ENCODE measurements at regions of chr2 and their contacts with region 1.

Region 1: DNA sequence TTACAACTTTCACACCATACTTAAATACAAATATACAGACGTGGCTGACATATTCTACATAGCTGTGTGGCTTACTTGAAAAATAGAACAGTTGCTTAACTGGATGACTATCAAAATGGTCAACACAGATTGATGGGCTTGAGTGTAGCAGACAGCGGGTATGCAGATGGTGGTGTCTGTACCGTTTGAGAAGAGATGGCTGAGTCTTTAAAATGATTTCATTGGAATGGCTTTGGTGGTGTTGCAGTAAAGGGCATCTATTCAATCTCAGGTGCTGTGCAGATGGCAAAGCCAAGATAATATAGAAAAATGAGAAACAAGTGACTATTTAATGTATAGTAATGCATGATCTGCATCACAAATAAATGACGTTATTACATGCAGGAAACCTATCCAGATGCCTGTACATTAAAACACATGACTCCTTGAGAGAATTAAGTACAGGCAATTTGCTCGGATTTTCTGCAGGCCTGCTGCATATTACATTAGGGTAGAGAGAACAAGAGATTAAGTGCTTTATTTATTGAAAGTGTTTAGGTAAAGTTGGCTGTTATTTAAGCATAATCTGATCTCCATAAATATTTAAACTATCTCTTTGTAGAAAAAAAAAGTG is 68.5 kb downstream of the AGPS start:
- DNase-seq: no peak
- H3K4me3 ChIP-seq: no peak overlapping the region
- H3K27ac ChIP-seq: no peak overlapping the region
- H3K4me1 ChIP-seq: no peaks in the 10 kb centered on the region
- H3K27me3 ChIP-seq: no peaks in the 10 kb centered on the region
- CTCF ChIP-seq: no peak

Region 2: GRCh38 chr2:177175917-177176668 is 285.0 kb before region 1 on chr2:
- CTCF ChIA-PET with region 1: interaction called, 16 read pairs
- dilution Hi-C with region 1: no loop called
- in situ Hi-C with region 1: no loop called
- intact Hi-C with region 1: no loop called
- DNase-seq: no peak
- H3K4me3 ChIP-seq: no peak overlapping the region
- H3K27ac ChIP-seq: no peak overlapping the region
- H3K4me1 ChIP-seq: peaks cover 25% of the 10 kb centered on the region
- H3K27me3 ChIP-seq: no peaks in the 10 kb centered on the region
- CTCF ChIP-seq: no peak

Region 3: DNA sequence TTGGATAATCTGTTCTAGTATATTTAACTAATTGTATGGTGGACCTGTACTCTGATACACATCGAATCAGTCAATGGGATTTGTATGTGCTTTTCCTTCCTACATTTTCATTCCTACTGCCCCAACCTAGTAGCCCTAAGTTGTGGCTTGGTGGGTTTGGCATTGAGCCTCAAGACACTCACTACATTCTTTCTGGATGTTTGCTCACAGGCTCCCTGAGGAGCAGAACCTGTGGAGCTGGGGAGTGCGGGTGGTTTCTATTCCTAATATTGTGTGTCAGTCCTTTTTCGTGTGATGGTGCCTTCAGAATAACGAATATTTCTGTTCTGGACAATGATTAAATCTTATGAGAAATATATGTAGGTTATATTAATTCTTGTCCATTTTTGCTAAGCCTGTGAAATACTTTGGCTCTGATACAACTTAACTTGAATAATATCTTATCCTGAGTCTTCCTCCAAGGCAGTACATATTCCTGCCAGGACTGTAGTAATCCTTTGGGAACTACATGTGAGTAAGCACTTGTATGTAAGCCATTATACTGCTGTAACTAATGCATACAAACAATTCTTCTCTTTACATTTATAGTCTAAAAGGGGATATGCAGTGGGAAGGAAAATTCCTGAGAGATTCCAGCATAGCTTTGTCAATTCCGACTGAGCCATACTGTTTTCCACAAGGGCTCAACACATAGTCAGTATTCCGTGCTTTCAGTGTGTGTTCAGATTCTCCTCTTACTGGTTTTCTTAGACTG is 82.1 kb after region 1 on chr2:
- CTCF ChIA-PET with region 1: no interaction called
- dilution Hi-C with region 1: no loop called
- in situ Hi-C with region 1: no loop called
- intact Hi-C with region 1: no loop called
- DNase-seq: peak; percentile 39
- H3K4me3 ChIP-seq: no peak overlapping the region
- H3K27ac ChIP-seq: no peak overlapping the region
- H3K4me1 ChIP-seq: peaks cover 8% of the 10 kb centered on the region
- H3K27me3 ChIP-seq: no peaks in the 10 kb centered on the region
- CTCF ChIP-seq: no peak